B cell (primary cell): ENCODE measurements at regions of chr11 and their contacts with region 1.

Region 1: GRCh38 chr11:73760679-73761402 is at the start of gene RAB6A:
- DNase-seq: peak; percentile 100
- ATAC-seq: peak; percentile 88
- H3K4me3 ChIP-seq: peak within 1 kb of the TSS; percentile 39 to 91 (median 86)
- H3K4me3 Mint-ChIP-seq: peak within 1 kb of the TSS; percentile 86
- H3K27ac ChIP-seq: peak within 1 kb of the TSS; percentile 81 to 89
- H3K27ac Mint-ChIP-seq: peak within 1 kb of the TSS; percentile 92
- H3K4me1 ChIP-seq: peaks cover 15 to 17% of the 10 kb centered on the region in 2 donors
- H3K4me1 Mint-ChIP-seq: peaks cover 27% of the 10 kb centered on the region
- H3K27me3 ChIP-seq: no peaks in the 10 kb centered on the region
- H3K27me3 Mint-ChIP-seq: peaks cover 3% of the 10 kb centered on the region
- CTCF ChIP-seq: peak; percentile 28
- total RNA-seq, gene RAB6A: 70.5 and 80.5 TPM in 2 replicates

Region 2: DNA sequence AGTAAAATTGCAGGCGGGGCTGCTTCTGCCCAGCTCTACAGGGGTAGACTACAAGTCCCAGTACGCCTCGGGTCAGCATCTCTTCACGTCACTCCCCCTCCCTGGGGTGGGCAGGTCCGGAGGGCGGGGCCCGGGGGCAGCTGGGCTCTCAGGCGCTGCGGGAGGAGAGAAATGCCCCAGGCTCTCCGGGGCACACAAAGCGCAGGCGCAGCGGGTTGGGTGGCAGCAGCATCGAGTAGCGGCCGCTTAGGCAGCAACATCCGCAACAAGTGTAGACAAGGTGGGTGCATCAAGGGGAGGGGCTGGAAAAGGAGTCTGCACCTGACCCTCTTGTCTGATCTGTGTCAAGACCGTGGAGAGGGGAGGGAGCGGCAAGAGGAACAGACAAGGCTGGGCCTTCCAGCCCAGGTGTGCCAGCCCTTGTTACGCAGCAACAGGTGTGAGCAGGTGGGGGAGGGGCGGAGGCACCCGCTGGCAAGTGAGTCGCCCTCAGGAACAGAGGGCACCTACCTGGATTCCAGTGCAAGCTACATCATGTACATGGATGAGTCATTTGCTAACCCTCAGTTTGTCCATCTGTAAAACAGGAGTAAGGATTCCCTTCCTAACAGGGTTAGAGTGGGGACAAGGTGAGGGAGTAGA is 113.3 kb before region 1 on chr11:
- CTCF ChIA-PET with region 1: no interaction called
- POLR2A ChIA-PET with region 1: interaction called, 3 read pairs
- intact Hi-C with region 1: loop called (anchors 1 kb)
- DNase-seq: peak; percentile 92
- ATAC-seq: peak; percentile 100
- H3K4me3 ChIP-seq: peak overlapping the region in 4 of 5 experiments; percentile 23 to 56 (median 48)
- H3K4me3 Mint-ChIP-seq: peak overlapping the region; percentile 87
- H3K27ac ChIP-seq: no peak overlapping the region
- H3K27ac Mint-ChIP-seq: peak overlapping the region; percentile 87
- H3K4me1 ChIP-seq: peaks cover 11 to 20% of the 10 kb centered on the region in 2 donors
- H3K4me1 Mint-ChIP-seq: peaks cover 23% of the 10 kb centered on the region
- H3K27me3 ChIP-seq: peaks cover 0 to 5% (median 0%) of the 10 kb centered on the region in 4 experiments
- H3K27me3 Mint-ChIP-seq: peaks cover 4% of the 10 kb centered on the region
- CTCF ChIP-seq: no peak

Region 3: GRCh38 chr11:73750228-73750627 is 10.6 kb before region 1 on chr11:
- CTCF ChIA-PET with region 1: no interaction called
- POLR2A ChIA-PET with region 1: no interaction called
- intact Hi-C with region 1: no loop called
- DNase-seq: no peak
- ATAC-seq: no peak
- H3K4me3 ChIP-seq: no peak overlapping the region
- H3K4me3 Mint-ChIP-seq: no peak overlapping the region
- H3K27ac ChIP-seq: no peak overlapping the region
- H3K27ac Mint-ChIP-seq: no peak overlapping the region
- H3K4me1 ChIP-seq: peaks cover 6% of the 10 kb centered on the region in 2 donors
- H3K4me1 Mint-ChIP-seq: peaks cover 34% of the 10 kb centered on the region
- H3K27me3 ChIP-seq: no peaks in the 10 kb centered on the region
- H3K27me3 Mint-ChIP-seq: no peaks in the 10 kb centered on the region
- CTCF ChIP-seq: no peak

Region 4: GRCh38 chr11:73787643-73788537 is 27.0 kb after region 1 on chr11 and contains the start of gene MRPL48:
- CTCF ChIA-PET with region 1: interaction called, 8 read pairs
- POLR2A ChIA-PET with region 1: interaction called, 4 read pairs
- intact Hi-C with region 1: loop called (anchors 1 kb)
- DNase-seq: peak; percentile 94
- ATAC-seq: peak; percentile 100
- H3K4me3 ChIP-seq: peak within 1 kb of the TSS; percentile 67 to 98 (median 89)
- H3K4me3 Mint-ChIP-seq: peak within 1 kb of the TSS; percentile 99
- H3K27ac ChIP-seq: peak within 1 kb of the TSS; percentile 75 to 77
- H3K27ac Mint-ChIP-seq: peak within 1 kb of the TSS; percentile 98
- H3K4me1 ChIP-seq: peaks cover 13 to 14% of the 10 kb centered on the region in 2 donors
- H3K4me1 Mint-ChIP-seq: peaks cover 20% of the 10 kb centered on the region
- H3K27me3 ChIP-seq: no peaks in the 10 kb centered on the region
- H3K27me3 Mint-ChIP-seq: no peaks in the 10 kb centered on the region
- CTCF ChIP-seq: no peak
- total RNA-seq, gene MRPL48: 26.6 and 28.3 TPM in 2 replicates

Region 5: GRCh38 chr11:73818846-73819245 is 58.0 kb after region 1 on chr11:
- CTCF ChIA-PET with region 1: no interaction called
- POLR2A ChIA-PET with region 1: no interaction called
- intact Hi-C with region 1: no loop called
- DNase-seq: no peak
- ATAC-seq: no peak
- H3K4me3 ChIP-seq: no peak overlapping the region
- H3K4me3 Mint-ChIP-seq: no peak overlapping the region
- H3K27ac ChIP-seq: no peak overlapping the region
- H3K27ac Mint-ChIP-seq: no peak overlapping the region
- H3K4me1 ChIP-seq: no peaks in the 10 kb centered on the region
- H3K4me1 Mint-ChIP-seq: no peaks in the 10 kb centered on the region
- H3K27me3 ChIP-seq: no peaks in the 10 kb centered on the region
- H3K27me3 Mint-ChIP-seq: no peaks in the 10 kb centered on the region
- CTCF ChIP-seq: no peak

Region 6: GRCh38 chr11:74170694-74171629 is 410.1 kb after region 1 on chr11 and contains the starts of genes C2CD3 and PPME1:
- CTCF ChIA-PET with region 1: no interaction called
- POLR2A ChIA-PET with region 1: interaction called, 4 read pairs
- intact Hi-C with region 1: loop called (anchors 1 kb)
- DNase-seq: peak; percentile 99
- ATAC-seq: peak; percentile 94
- H3K4me3 ChIP-seq: peak within 1 kb of the TSS; percentile 82 to 95 (median 85)
- H3K4me3 Mint-ChIP-seq: no peak within 1 kb of the TSS
- H3K27ac ChIP-seq: peak within 1 kb of the TSS; percentile 73 to 80
- H3K27ac Mint-ChIP-seq: no peak within 1 kb of the TSS
- H3K4me1 ChIP-seq: peaks cover 22 to 26% of the 10 kb centered on the region in 2 donors
- H3K4me1 Mint-ChIP-seq: peaks cover 6% of the 10 kb centered on the region
- H3K27me3 ChIP-seq: no peaks in the 10 kb centered on the region
- H3K27me3 Mint-ChIP-seq: no peaks in the 10 kb centered on the region
- CTCF ChIP-seq: peak; percentile 11
- total RNA-seq, gene C2CD3: 63.9 and 69.0 TPM in 2 replicates
- total RNA-seq, gene PPME1: 18.7 and 23.6 TPM in 2 replicates